Common myeloid progenitor, CD34-positive (primary cell): ENCODE measurements at regions of chr16 and their contacts with region 1.

Region 1: GRCh38 chr16:58487566-58488351 is 12.2 kb upstream of the NDRG4 start:
- DNase-seq: peak; percentile 68 to 77 (median 75)
- H3K4me3 ChIP-seq: peak overlapping the region in 3 of 7 experiments; percentile 11 to 58 (median 42)
- H3K27ac ChIP-seq: no peak overlapping the region
- H3K4me1 ChIP-seq: peaks cover 0 to 4% (median 3%) of the 10 kb centered on the region in 4 experiments
- H3K27me3 ChIP-seq: peaks cover 0 to 3% (median 0%) of the 10 kb centered on the region in 5 experiments

Region 2: GRCh38 chr16:58345574-58346354 is 142.0 kb before region 1 on chr16:
- CTCF ChIA-PET with region 1: interaction called, 29 read pairs
- POLR2A ChIA-PET with region 1: no interaction called
- DNase-seq: no peak
- H3K4me3 ChIP-seq: no peak overlapping the region
- H3K27ac ChIP-seq: no peak overlapping the region
- H3K4me1 ChIP-seq: peaks cover 0 to 3% (median 0%) of the 10 kb centered on the region in 4 experiments
- H3K27me3 ChIP-seq: peaks cover 0 to 28% (median 6%) of the 10 kb centered on the region in 5 experiments

Region 3: DNA sequence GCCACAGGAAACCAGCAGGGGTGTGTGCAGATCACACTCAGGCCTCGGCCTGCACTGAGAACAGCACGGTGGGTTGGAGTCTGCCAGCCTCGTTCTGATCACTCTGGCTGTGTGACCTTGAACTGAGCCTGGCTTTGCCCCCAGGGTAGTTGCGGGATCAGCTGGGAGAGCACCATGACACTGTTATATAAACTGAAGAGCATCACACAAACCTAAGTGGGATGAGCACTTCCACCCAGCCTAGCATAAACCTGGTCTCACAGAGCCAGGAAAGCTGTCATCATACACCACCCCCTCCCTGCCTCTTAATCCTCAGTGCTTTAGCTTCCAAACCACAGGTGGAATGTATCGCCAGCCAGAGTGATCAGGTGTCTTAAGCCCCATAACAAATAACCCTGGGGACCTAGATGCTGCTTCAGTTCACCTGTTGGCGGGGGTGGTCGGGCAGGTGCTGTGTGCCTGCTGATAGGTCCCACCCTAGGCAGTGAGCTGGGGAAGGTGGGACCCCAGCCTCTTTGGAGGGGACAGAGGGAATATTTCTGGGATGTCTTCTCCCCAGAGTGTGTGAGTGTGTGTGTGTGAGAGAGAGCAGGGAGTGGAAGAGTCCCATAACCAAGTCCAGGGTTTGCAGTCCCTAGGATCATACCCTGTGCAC is 16.3 kb before region 1 on chr16:
- CTCF ChIA-PET with region 1: interaction called, 11 read pairs
- POLR2A ChIA-PET with region 1: no interaction called
- DNase-seq: no peak
- H3K4me3 ChIP-seq: no peak overlapping the region
- H3K27ac ChIP-seq: no peak overlapping the region
- H3K4me1 ChIP-seq: peaks cover 0 to 5% (median 2%) of the 10 kb centered on the region in 4 experiments
- H3K27me3 ChIP-seq: peaks cover 0 to 25% (median 22%) of the 10 kb centered on the region in 5 experiments

Region 4: DNA sequence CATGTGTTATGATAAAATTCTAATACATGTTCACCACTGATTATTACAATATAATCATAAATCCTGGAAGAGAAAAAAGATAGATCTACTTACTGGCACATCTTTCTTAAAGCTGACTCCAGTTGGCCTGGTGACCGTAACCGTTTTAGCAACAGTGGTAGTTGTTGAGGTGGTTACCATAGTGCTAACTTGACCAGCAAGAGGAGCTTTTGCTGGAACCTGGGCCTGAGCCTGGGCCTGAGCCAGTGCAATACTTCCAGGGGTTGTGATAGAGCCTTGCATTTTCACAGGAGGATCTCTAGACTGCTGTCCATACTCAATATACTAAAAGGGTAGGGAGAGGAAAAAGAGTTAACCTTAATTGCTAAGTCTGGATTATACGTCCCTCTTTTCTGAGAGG is 63.7 kb after region 1 on chr16:
- CTCF ChIA-PET with region 1: no interaction called
- POLR2A ChIA-PET with region 1: no interaction called
- DNase-seq: no peak
- H3K4me3 ChIP-seq: no peak overlapping the region
- H3K27ac ChIP-seq: peak overlapping the region in 1 of 2 experiments; percentile 37
- H3K4me1 ChIP-seq: no peaks in the 10 kb centered on the region
- H3K27me3 ChIP-seq: no peaks in the 10 kb centered on the region

Region 5: DNA sequence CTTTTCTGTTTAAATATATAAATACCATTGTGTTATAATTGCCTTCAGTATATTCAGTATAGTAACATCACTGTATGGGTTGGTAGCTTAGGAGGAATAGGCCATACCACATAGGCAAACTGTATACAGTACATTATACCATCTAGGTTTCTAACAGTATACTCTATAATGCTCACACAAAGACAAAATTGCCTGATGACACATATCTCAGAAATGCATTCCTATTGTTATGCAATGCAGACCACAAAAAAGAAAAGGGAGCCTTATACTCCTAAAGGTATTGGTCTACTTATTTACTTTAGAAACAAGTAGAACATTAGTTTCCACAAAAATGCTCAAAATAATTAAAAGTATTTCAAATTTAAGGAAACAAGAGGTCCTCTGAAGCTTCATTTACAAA is 75.5 kb after region 1 on chr16:
- CTCF ChIA-PET with region 1: no interaction called
- POLR2A ChIA-PET with region 1: no interaction called
- DNase-seq: no peak
- H3K4me3 ChIP-seq: no peak overlapping the region
- H3K27ac ChIP-seq: no peak overlapping the region
- H3K4me1 ChIP-seq: no peaks in the 10 kb centered on the region
- H3K27me3 ChIP-seq: no peaks in the 10 kb centered on the region